ENCODE measurements at regions of chrX and their contacts with region 1.

Region 1: GRCh38 chrX:141278302-141278701 is 36.0 kb upstream of the SPANXC start:
- DNase-seq: no peak
- H3K4me3 ChIP-seq: no peak overlapping the region
- H3K27ac ChIP-seq: no peak overlapping the region
- H3K4me1 ChIP-seq: no peaks in the 10 kb centered on the region
- H3K27me3 ChIP-seq: no peaks in the 10 kb centered on the region
- CTCF ChIP-seq: peak; percentile 23

Region 2: DNA sequence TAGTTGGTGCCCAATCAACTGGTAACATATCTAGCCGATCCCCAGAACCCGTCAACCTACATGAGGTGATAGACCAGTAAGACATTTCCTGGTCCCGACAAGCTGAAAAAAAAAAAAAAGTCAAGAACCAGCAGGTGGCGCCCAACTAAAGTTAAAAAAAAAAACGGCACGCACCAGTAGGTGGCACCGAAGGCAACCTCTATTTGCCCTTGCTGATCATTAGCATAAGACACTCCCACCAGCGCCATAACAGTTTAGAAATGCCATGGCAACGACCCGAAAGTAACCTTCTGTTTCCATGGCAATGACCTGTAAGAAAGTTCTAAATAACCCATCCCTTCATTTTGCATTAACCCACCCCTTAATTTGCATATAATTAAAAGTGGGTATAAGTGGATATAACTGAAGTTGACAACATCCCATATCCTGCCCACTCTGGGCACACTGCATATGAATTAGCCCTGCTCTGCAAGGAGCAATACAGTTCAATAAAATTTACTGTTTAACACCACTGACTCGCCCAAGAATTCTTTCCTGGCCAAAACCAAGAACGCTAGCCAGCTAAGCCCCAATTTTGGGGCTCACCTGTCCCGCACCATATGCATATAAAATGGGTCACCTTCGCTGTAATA is 359.8 kb before region 1 on chrX:
- intact Hi-C with region 1: loop called (anchors 5 kb)
- DNase-seq: no peak
- H3K4me3 ChIP-seq: no peak overlapping the region
- H3K27ac ChIP-seq: no peak overlapping the region
- H3K4me1 ChIP-seq: no peaks in the 10 kb centered on the region
- H3K27me3 ChIP-seq: no peaks in the 10 kb centered on the region
- CTCF ChIP-seq: peak; percentile 45

Measured in colonic mucosa (tissue), 4 donors.